Right cardiac atrium (tissue), 5 donors: ENCODE measurements at regions of chr1 and their contacts with region 1.

Region 1: GRCh38 chr1:31955917-31956736 is 18.0 kb upstream of the PTP4A2 start:
- DNase-seq: peak; percentile 85 to 90 (median 85)
- ATAC-seq: peak; percentile 73 to 80
- H3K4me3 ChIP-seq: no peak overlapping the region
- H3K27ac ChIP-seq: peak overlapping the region; percentile 96
- H3K4me1 ChIP-seq: peaks cover 5% of the 10 kb centered on the region
- H3K27me3 ChIP-seq: no peaks in the 10 kb centered on the region

Region 2: GRCh38 chr1:31815752-31816500 is 140.2 kb before region 1 on chr1 and contains the start of gene SPOCD1:
- intact Hi-C with region 1: loop called in 1 of 4 experiments (anchors 10 kb)
- DNase-seq: peak; percentile 83 to 90 (median 90)
- ATAC-seq: peak; percentile 72 to 85
- H3K4me3 ChIP-seq: no peak within 1 kb of the TSS
- H3K27ac ChIP-seq: no peak within 1 kb of the TSS
- H3K4me1 ChIP-seq: no peaks in the 10 kb centered on the region
- H3K27me3 ChIP-seq: no peaks in the 10 kb centered on the region
- total RNA-seq, gene SPOCD1: 0.15 to 0.25 (median 0.17) TPM in 3 of 4 donors, not detected in the other

Region 3: DNA sequence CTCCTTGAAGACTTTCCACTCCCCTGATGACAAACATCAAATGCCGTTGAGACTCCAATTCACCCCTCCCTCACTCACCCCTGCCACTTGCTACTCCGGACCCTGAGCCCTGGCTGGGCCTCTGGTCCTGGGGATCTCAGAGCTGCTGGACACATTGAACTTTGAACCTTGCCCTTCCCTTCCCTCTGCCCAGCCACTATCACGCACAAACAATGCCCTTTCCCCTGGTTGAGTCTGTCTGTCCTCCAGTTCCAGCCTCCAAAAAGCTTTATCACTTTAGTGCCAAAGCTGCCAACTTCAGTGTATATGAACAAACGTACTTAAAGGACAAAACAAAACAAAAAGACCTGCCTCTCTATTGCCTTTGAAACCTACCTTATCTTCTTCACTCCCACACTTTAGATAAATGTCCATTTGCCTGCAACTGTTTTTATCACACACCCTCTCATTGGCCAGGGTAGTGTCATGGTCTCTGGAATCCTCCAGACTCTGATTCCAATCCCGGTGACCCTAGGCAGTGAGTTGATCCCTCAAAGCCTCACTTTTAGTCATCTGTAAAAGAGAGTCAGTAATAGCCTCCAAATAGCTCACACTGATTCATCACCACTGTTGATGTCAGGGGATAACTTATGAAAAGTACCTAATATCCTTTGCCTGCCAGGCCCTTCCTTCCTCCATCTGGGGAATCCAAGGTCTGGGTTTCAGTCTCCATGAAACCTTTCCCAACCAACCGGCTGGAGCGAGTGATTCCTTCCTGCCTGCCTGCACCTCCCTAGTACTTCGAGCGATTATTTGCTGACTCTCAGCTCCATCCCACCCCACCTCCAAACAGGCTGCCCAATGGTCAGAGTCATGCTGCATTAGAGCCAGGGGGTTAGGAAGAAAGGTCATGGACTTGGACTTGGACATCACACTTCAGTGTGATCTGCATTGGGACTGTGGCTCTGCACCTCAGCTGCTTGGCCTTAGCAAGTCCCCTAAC is 124.4 kb before region 1 on chr1:
- intact Hi-C with region 1: loop called in 1 of 4 experiments (anchors 10 kb)
- DNase-seq: no peak
- ATAC-seq: no peak
- H3K4me3 ChIP-seq: no peak overlapping the region
- H3K27ac ChIP-seq: peak overlapping the region; percentile 56
- H3K4me1 ChIP-seq: peaks cover 3% of the 10 kb centered on the region
- H3K27me3 ChIP-seq: no peaks in the 10 kb centered on the region